ENCODE measurements at regions of chr11 and their contacts with region 1.

Region 1: GRCh38 chr11:101848262-101848661 is 66.5 kb upstream of the CEP126 start:
- DNase-seq: no peak
- H3K4me3 ChIP-seq: no peak overlapping the region
- H3K27ac ChIP-seq: no peak overlapping the region
- H3K4me1 ChIP-seq: no peaks in the 10 kb centered on the region
- H3K27me3 ChIP-seq: no peaks in the 10 kb centered on the region
- CTCF ChIP-seq: peak; percentile 13 to 32

Region 2: GRCh38 chr11:101428918-101429317 is 419.3 kb before region 1 on chr11:
- CTCF ChIA-PET with region 1: no interaction called
- dilution Hi-C with region 1: no loop called
- in situ Hi-C with region 1: no loop called
- intact Hi-C with region 1: loop called (anchors 1 kb)
- DNase-seq: peak; percentile 30
- H3K4me3 ChIP-seq: no peak overlapping the region
- H3K27ac ChIP-seq: no peak overlapping the region
- H3K4me1 ChIP-seq: peaks cover 9% of the 10 kb centered on the region
- H3K27me3 ChIP-seq: no peaks in the 10 kb centered on the region
- CTCF ChIP-seq: peak; percentile 65 to 68

Region 3: DNA sequence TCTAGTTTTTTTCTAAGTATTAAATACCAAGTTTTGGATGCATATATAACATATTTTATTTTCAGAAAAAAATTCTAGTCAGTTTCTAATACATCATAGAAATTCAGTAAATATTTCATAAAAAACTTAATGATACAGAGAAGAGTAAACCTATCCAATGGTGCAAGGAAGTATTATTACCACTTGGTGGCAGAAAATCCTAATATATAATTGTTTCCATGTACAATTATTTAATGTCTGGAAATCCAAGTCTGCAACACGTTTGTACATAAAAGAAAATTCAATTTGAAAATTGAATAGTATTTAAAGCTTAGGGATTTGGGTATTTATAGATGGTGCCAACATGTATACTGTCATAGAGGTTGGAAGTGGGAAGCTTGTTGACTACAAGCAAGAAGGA is 391.4 kb before region 1 on chr11:
- CTCF ChIA-PET with region 1: no interaction called
- dilution Hi-C with region 1: no loop called
- in situ Hi-C with region 1: loop called (anchors 5 kb)
- intact Hi-C with region 1: loop called (anchors 1 kb)
- DNase-seq: no peak
- H3K4me3 ChIP-seq: no peak overlapping the region
- H3K27ac ChIP-seq: no peak overlapping the region
- H3K4me1 ChIP-seq: no peaks in the 10 kb centered on the region
- H3K27me3 ChIP-seq: no peaks in the 10 kb centered on the region
- CTCF ChIP-seq: peak; percentile 41 to 46

Region 4: DNA sequence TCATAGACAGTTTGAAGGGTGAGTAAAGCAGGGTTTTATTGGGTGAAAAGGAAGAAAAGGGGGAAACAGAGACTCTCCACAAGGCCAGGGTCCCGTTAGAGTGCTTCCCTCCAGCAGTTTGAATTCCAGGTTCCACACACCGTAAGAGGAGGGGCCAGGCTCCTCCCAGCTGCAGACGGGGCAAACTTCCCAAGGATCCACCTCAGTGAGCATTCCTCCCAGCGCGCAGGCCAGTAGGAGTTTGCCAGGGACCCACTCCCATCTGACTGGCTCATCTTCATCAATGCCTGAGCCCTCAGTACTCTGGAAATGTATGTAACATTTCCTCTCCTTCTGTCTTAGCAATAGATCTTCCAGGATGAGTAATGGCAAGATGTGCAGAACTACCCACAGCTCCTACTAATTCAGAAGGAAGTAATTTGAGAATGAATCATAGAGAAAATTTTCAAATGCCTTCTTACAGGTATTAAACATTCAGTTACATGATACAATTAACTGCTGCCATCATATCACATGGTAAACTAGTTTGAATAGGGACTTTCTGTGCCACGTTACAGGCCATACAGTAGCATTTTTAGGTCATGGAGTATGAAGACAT is 230.4 kb before region 1 on chr11:
- CTCF ChIA-PET with region 1: no interaction called
- dilution Hi-C with region 1: no loop called
- in situ Hi-C with region 1: no loop called
- intact Hi-C with region 1: loop called (anchors 5 kb)
- DNase-seq: peak; percentile 85
- H3K4me3 ChIP-seq: no peak overlapping the region
- H3K27ac ChIP-seq: peak overlapping the region; percentile 92
- H3K4me1 ChIP-seq: peaks cover 22% of the 10 kb centered on the region
- H3K27me3 ChIP-seq: no peaks in the 10 kb centered on the region
- CTCF ChIP-seq: no peak

Region 5: DNA sequence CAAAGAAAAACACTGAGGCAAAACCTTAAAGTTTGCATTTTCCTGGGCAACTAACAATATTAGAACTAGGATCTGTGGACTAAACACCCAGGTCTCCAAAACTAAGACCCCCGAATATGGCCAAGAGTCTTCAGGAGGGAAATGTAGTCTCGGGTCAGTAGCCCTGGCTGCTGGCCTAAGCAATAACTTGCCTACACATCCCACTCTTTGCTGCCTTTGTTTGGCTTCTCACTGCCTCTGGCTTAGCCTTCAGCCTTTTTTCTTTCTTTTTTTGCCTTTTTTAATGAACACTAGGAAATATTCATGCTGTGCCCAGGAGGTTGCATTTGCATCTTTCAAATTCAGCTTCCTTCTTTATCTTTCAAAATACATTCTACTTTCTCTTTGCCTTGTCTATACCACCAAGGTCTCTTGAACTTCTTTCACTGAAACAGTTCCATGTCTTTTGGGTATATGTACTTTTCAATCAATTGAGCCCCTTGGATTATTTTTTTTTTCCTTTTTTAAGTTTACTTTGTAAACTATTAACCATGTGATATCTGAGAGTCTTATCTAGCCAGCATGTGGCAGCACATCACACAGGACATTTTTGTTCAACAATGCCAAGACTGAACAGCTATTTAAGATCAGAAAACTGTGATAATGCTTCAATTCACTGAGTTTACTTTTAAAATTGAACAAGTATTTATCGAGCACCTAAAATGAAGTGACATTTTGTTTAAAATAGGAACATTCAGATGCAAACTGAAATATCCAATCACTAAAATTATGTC is 99.5 kb before region 1 on chr11:
- CTCF ChIA-PET with region 1: no interaction called
- dilution Hi-C with region 1: no loop called
- in situ Hi-C with region 1: no loop called
- intact Hi-C with region 1: no loop called
- DNase-seq: no peak
- H3K4me3 ChIP-seq: no peak overlapping the region
- H3K27ac ChIP-seq: no peak overlapping the region
- H3K4me1 ChIP-seq: no peaks in the 10 kb centered on the region
- H3K27me3 ChIP-seq: no peaks in the 10 kb centered on the region
- CTCF ChIP-seq: no peak

Region 6: DNA sequence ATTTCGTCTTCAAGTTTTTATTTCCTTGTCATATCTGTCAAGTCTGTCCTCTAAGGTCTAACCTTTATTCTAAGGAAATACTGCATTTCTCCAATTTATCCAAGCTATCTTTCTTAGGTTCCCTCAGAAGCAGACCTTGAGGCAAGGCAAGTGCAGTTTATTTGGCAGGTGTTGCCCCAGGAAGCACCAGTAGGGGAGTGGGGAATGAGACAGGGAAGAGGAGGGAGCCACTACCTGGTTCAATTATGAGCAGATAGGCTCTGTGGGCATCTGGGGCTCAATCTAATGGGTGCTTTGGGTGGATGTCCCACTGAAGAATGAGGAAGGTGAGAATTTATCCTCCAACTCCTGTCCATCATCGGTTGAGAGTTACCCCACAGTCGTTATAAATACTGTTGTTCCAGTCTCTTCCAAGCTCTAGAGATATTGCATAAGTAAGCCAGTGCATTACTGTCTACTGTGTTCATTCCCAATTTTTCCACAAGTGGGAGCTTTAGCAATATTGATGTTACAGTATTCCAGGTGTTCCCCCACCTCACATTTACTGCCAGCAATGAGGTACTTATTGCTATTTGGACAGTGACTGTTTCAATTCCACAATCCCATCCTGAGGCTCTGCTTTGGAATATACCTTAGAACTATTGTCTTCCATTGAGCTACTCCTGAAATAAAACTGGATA is 88.4 kb before region 1 on chr11:
- CTCF ChIA-PET with region 1: no interaction called
- dilution Hi-C with region 1: no loop called
- in situ Hi-C with region 1: no loop called
- intact Hi-C with region 1: loop called (anchors 5 kb)
- DNase-seq: no peak
- H3K4me3 ChIP-seq: no peak overlapping the region
- H3K27ac ChIP-seq: no peak overlapping the region
- H3K4me1 ChIP-seq: no peaks in the 10 kb centered on the region
- H3K27me3 ChIP-seq: no peaks in the 10 kb centered on the region
- CTCF ChIP-seq: peak; percentile 21 to 45

Region 7: GRCh38 chr11:101914738-101915426 is 66.6 kb after region 1 on chr11 and contains the start of gene CEP126:
- CTCF ChIA-PET with region 1: interaction called, 10 read pairs
- dilution Hi-C with region 1: no loop called
- in situ Hi-C with region 1: no loop called
- intact Hi-C with region 1: no loop called
- DNase-seq: peak; percentile 92
- H3K4me3 ChIP-seq: peak within 1 kb of the TSS; percentile 75 to 84 (median 82)
- H3K27ac ChIP-seq: peak within 1 kb of the TSS; percentile 93
- H3K4me1 ChIP-seq: peaks cover 12% of the 10 kb centered on the region
- H3K27me3 ChIP-seq: no peaks in the 10 kb centered on the region
- CTCF ChIP-seq: peak; percentile 20 to 59
- total RNA-seq, gene CEP126: 2.2 to 2.8 TPM

Measured in mammary epithelial cell (primary cell).